ENCODE measurements at regions of chr3 and their contacts with region 1.

Region 1: DNA sequence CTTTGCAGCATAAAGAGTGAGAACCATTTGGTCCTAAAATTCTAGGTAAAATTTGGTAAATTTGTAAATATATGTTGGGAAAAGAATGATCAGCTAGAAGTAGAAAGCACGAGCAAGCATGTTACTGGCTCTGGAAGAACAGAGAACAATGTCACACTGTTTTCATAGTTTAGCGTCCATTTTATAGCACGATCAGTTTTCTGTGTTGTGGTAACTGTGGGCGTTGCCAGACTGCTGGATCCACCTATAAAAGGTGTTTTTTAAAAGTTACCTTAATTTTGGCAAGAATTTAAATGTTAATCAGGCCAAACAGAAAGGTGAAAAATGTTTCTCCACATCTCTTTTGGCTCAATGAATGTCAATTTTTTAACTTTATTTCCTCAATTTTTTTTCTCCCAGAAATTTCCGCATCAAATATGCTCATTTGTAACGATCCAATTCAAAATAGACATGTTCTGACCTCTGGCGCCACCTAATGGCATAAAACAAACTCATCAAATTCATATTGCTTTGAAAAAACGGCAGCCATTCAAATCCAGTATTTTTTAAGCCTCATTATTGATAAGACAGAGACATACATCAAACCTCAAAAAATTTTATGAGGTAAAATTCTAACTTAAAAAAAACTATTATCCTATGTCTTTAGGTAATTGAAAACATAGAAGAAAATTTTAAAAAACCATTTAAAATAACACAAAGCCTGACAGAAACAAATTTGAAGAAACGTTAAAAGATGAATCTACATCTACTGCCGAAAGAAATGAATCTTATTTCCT is 5.5 kb upstream of the GP5 start:
- DNase-seq: peak in 1 of 3 donors; percentile 88
- ATAC-seq: peak; percentile 85
- H3K4me3 ChIP-seq: no peak overlapping the region
- H3K4me1 ChIP-seq: no peaks in the 10 kb centered on the region
- CTCF ChIP-seq: peak; percentile 21

Region 2: DNA sequence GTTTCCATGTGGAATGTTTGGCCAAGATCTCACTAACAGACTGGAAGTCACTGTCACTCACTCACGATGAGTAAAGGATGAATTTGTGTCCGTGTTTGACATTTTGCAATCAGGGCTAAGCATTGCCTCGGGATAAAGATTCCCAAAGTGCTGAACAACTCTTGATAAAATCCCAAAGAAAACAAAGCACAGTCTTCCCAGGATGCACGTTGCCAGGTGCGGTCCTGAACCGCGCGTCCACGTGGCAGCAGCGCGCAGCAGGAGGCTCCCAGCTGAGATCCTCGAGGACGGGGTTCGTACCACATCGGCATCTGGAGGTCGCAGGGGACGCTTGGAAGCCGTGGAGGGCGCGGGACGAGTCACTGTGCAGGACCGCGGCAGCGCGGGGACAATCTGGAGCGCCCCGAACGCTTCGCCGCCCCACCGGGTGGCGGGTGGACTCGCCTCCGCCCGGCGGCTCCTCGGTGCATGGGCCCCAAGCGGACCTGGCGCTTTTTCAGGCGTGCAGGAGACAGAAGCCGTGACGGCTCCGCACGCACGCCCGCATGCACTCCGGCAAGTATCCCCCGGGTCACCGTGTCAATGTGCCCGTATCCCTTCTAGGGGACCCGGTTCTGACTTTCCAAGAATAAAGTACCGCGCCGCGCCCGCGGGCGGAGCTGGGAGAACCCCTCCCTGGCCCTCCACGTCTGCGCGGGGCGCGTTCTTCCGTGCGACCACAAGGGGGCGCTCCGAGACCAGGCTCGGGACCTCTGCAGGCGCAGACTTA is 71.2 kb before region 1 on chr3:
- intact Hi-C with region 1: loop called (anchors 2 kb)
- DNase-seq: peak; percentile 88 to 93 (median 90)
- ATAC-seq: peak; percentile 97
- H3K4me3 ChIP-seq: no peak overlapping the region
- H3K4me1 ChIP-seq: peaks cover 11% of the 10 kb centered on the region
- CTCF ChIP-seq: peak; percentile 97